ENCODE measurements at regions of chr19 and their contacts with region 1.

Region 1: DNA sequence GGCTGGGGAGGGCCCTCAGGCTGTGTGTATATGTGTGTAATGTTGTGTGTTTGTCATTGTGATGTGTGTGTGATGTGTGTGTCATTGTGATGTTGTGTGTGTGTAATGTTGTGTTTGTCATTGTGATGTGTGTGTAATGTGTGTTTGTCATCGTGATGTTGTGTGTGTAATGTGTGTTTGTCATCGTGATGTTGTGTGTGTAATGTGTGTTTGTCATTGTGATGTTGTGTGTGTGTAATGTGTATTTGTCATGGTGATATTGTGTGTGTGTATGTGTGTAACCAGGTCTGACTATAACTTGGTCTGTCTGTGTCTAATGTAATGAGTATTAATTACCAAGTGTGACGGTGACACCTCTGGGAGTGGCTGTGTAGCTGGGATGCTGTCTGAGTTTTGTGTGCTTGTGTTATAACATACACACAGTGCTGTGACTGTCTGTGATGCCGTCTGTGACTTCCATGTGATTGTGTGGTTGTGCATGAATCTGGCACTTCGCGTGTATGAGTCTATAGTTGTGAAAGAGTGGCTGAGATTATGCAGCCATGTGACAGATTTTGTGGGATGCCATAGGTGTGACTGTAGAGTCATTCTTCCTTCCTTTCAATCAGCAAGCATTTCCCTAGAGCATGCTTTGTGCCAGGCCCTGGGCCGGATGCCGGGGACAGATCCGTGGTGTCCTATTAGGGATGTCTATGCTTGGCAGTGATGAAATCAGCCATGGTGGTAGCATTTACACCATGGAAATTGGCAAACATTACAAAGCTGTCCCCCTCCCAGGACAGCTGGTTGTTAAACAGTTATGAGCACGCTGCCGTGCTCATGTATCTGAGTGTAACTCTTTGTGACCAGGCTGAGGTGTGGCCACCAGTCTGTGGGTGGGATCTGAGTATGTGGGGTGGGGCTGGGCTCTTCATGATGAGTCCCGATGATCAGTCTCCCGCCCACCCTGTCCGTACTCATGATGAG is 6.4 kb downstream of the TNFSF14 start:
- DNase-seq: no peak
- ATAC-seq: peak; percentile 62
- H3K4me3 ChIP-seq: no peak overlapping the region
- H3K4me3 Mint-ChIP-seq: no peak overlapping the region
- H3K27ac ChIP-seq: no peak overlapping the region
- H3K27ac Mint-ChIP-seq: peak overlapping the region in 1 of 9 donors; percentile 59
- H3K4me1 ChIP-seq: peaks cover 0 to 48% of the 10 kb centered on the region in 2 donors
- H3K4me1 Mint-ChIP-seq: peaks cover 1 to 29% (median 20%) of the 10 kb centered on the region in 7 donors
- H3K27me3 ChIP-seq: no peaks in the 10 kb centered on the region
- H3K27me3 Mint-ChIP-seq: peaks cover 0 to 3% (median 0%) of the 10 kb centered on the region in 5 donors

Region 2: DNA sequence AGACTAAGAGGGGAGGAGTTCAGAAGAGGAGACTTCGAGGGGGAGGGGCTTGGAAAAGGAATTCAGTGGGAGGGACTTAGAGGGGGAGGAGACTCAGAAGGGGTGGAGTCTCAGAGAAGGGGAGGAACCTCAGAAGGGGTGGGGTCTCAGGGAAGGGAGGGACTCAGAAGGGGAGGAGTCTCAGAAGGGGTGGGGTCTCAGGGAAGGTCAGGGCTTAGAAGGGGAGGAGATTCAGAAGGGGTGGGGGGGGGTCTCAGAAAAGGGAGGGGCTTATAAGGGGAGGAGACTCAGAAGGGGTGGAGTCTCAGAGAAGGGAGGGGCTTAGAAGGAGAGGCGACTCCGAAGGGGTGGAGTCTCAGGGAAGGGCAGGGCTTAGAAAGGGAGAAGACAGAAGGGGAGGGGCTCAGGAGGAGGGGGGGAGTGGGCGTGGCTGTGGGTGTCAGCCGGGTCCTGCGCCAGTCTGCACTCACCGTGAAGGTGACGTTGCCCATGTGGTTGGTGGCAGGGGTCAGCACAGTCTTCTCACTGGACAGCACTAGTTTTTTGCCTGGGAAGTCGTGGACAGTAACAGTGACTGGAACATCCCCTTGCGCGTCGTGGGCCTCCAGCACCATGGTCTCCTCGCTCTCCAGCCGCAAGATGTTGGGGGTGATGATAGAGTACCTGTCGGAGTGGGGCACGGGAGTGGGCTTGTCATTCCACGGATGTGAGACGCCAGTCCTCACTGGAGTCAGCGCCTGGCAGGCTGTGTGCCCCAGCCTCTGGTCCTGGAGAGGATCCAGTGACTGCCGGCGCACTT is 55.4 kb after region 1 on chr19:
- CTCF ChIA-PET with region 1: no interaction called
- POLR2A ChIA-PET with region 1: no interaction called
- intact Hi-C with region 1: loop called in 1 of 2 experiments (anchors 5 kb)
- DNase-seq: peak in 4 of 9 donors; percentile 10 to 38 (median 31)
- ATAC-seq: peak; percentile 73
- H3K4me3 ChIP-seq: no peak overlapping the region
- H3K4me3 Mint-ChIP-seq: no peak overlapping the region
- H3K27ac ChIP-seq: no peak overlapping the region
- H3K27ac Mint-ChIP-seq: peak overlapping the region in 1 of 9 donors; percentile 4
- H3K4me1 ChIP-seq: no peaks in the 10 kb centered on the region
- H3K4me1 Mint-ChIP-seq: peaks cover 10 to 30% (median 21%) of the 10 kb centered on the region in 7 donors
- H3K27me3 ChIP-seq: no peaks in the 10 kb centered on the region
- H3K27me3 Mint-ChIP-seq: peaks cover 0 to 4% (median 0%) of the 10 kb centered on the region in 5 donors

Measured in naive thymus-derived CD4-positive, alpha-beta T cell (primary cell).